Colonic mucosa (tissue), 4 donors: ENCODE measurements at regions of chr4 and their contacts with region 1.

Region 1: GRCh38 chr4:26860157-26860921 is at the start of gene STIM2:
- DNase-seq: peak; percentile 98
- H3K4me3 ChIP-seq: peak within 1 kb of the TSS; percentile 67
- H3K27ac ChIP-seq: peak within 1 kb of the TSS; percentile 97
- H3K4me1 ChIP-seq: peaks cover 7% of the 10 kb centered on the region
- H3K27me3 ChIP-seq: no peaks in the 10 kb centered on the region
- CTCF ChIP-seq: peak; percentile 21
- total RNA-seq, gene STIM2: 20.7 to 30.3 TPM

Region 2: GRCh38 chr4:27000820-27001219 is 140.5 kb after region 1 on chr4:
- intact Hi-C with region 1: loop called (anchors 10 kb)
- DNase-seq: no peak
- H3K4me3 ChIP-seq: no peak overlapping the region
- H3K27ac ChIP-seq: no peak overlapping the region
- H3K4me1 ChIP-seq: no peaks in the 10 kb centered on the region
- H3K27me3 ChIP-seq: no peaks in the 10 kb centered on the region
- CTCF ChIP-seq: no peak